Heart right ventricle (tissue), 16 donors: ENCODE measurements at regions of chr2 and their contacts with region 1.

Region 1: DNA sequence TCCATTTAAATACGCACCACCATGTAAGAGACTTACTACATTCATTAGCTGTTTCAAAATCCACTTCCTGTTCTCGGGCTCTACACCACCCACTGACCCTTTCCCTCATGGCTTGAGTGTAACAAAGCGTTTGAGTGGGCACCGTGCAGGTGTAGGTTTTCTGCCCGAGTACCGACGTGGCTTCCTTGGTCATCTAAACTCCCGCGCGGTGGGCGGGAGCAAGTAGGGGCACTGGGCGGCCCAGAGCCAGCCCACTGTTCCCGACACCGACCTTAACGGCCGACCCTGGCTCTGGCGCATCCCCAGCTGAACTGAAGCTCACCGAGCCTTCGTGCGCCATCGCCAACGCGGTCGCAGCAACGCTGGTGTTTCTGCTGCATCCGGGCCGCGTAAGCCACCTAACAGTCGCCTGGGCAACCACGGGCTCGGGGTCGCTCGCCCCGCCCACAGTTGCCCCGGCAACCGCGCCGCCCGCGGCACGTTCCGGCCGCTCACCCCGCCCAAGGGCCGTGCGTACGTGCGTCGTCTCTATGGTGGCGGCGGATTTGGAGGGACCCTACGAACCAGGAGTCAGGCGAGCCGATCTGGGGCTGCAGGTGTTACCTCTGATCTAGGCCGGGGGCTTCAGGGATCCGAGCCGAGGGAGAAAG is at the starts of genes C2orf81 and WDR54:
- DNase-seq: peak; percentile 85 to 88
- ATAC-seq: peak; percentile 88 to 95 (median 90)
- H3K4me3 ChIP-seq: peak within 1 kb of the TSS; percentile 34 to 93 (median 68)
- H3K27ac ChIP-seq: peak within 1 kb of the TSS in 9 of 10 donors; percentile 17 to 86 (median 55)
- H3K4me1 ChIP-seq: peaks cover 3 to 37% (median 27%) of the 10 kb centered on the region in 9 donors
- H3K27me3 ChIP-seq: peaks cover 0 to 5% (median 0%) of the 10 kb centered on the region in 7 donors
- CTCF ChIP-seq: no peak
- total RNA-seq, gene C2orf81: 0.52 to 1.7 (median 0.99) TPM
- total RNA-seq, gene WDR54: 1.1 to 6.7 (median 2.4) TPM

Region 2: GRCh38 chr2:73640511-73640911 is 780.8 kb before region 1 on chr2:
- intact Hi-C with region 1: no loop called
- DNase-seq: no peak
- ATAC-seq: peak in 1 of 8 donors; percentile 11
- H3K4me3 ChIP-seq: no peak overlapping the region
- H3K27ac ChIP-seq: no peak overlapping the region
- H3K4me1 ChIP-seq: peaks cover 0 to 5% (median 0%) of the 10 kb centered on the region in 9 donors
- H3K27me3 ChIP-seq: no peaks in the 10 kb centered on the region
- CTCF ChIP-seq: no peak

Region 3: DNA sequence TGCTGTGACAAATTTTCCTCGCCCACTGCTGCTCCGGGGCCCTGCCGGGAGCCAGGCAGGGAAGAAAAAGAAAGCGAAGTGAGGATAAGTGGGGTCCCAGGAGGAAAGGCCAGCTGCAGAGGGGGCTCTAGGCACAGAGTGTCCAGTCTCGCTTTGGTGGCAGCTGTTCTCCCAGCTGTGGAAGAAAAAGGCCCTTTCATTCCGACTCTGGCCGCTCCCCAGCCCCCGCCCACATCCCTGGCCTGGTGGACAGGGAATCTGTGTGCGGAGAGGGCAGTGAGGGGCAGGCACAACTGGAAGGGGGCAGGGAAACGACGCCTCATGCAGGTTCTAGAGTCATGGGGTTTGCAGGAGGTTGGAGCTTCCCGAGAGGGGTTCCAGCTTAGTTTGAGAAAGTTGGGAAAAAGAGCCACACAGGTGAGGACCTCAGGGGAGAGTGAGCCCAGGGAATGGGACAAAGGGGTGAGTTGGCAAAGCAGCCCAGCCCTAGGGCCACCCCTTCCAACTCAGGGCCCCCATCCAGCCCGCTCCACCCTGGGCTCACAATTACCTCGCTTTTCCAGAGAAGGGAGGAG is 18.5 kb after region 1 on chr2:
- intact Hi-C with region 1: loop called in 1 of 10 experiments (anchors 2 kb)
- DNase-seq: peak; percentile 82 to 83
- ATAC-seq: peak; percentile 40 to 72 (median 67)
- H3K4me3 ChIP-seq: peak overlapping the region; percentile 31 to 71 (median 58)
- H3K27ac ChIP-seq: peak overlapping the region; percentile 51 to 97 (median 87)
- H3K4me1 ChIP-seq: peaks cover 6 to 72% (median 57%) of the 10 kb centered on the region in 9 donors
- H3K27me3 ChIP-seq: peaks cover 0 to 43% (median 0%) of the 10 kb centered on the region in 7 donors
- CTCF ChIP-seq: no peak

Region 4: DNA sequence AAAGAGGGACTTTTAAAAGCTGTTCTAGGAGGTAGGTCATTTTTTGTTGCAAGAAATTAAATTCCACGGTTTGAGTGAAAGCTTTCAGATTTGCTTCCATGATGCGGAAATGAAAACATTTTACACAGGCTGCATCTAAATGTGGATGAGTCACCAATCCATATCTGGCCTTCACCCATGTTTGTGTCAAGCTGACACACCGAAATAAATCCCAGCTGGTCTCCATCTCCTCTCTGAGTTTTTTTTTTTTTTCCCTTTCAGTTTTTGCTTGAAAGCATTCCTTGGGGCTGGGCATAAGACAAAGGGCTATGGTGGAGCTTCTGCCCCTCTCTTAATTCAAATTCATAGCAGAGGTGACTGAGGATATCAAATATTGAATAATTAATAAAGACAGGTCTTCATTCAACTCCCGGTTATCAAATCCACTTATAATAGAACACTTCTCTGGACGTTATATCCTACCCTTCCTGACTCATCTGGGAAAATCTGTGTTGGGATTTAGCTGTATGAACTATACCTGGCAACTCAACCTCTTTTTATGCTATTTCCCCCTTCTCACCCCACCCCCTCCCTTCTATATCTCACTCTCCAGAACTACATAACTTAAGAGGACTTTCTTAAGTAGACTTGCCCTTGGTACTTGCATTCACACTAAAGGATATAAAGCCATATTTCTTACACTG is 1847.7 kb after region 1 on chr2:
- intact Hi-C with region 1: no loop called
- DNase-seq: peak in 1 of 2 donors; percentile 9
- ATAC-seq: peak in 1 of 8 donors; percentile 45
- H3K4me3 ChIP-seq: no peak overlapping the region
- H3K27ac ChIP-seq: no peak overlapping the region
- H3K4me1 ChIP-seq: peaks cover 0 to 4% (median 0%) of the 10 kb centered on the region in 9 donors
- H3K27me3 ChIP-seq: no peaks in the 10 kb centered on the region
- CTCF ChIP-seq: no peak